Posterior vena cava (tissue), 2 donors: ENCODE measurements at regions of chr16 and their contacts with region 1.

Region 1: GRCh38 chr16:76343769-76344168 is 66.6 kb downstream of the CNTNAP4 start:
- DNase-seq: no peak

Region 2: DNA sequence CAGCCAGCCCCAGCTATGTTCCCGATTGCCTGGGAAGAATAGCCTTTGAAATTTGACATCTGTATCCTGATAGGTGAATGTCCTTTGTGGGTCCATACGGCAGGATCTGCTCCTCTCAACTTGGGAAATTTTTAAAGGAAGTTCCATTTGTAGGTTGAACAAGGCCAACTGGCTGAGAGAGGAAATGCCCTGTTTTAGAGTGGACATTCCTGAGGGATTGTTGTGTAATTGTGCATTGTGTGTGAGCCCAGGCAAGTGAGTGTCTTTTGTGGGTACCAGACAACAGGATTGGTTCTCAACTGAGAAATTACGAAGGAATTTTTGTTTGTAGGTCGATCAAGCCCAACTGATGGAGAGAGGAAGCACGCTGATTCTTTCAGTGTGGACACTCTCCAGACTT is 664.4 kb before region 1 on chr16:
- intact Hi-C with region 1: loop called in 1 of 2 experiments (anchors 5 kb)
- DNase-seq: no peak